ENCODE measurements at regions of chr1 and their contacts with region 1.

Region 1: DNA sequence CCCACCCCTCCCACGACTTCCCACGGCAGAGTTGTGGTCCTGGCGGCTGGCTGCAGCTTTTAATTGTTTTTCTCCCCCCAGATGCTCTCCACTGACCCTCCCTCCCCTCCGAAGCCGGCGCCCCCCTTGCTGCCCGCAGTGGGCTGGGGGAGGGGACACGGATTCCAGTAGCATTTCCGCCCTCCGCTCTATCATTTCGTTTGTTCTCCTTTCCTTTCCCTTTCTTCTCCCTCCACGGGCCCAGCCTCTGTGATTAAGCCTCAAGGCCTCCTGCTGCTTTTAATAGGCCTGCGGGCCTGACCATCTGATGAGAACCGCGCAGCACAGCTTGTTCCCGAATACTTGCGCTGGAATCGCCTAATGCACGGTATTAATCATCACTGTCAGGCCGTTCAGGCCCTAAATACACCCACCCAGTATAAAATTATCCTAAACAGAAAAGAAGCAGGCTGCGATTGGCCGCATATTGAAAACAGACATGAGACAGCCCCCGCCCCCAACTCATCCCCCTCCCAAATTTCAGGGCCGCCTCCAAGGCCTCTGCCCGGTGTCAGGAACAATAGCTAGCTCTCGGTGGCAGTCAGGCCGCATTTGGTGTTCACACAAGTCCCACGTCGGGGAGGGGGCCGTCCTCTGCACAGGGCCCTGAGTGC is 102.0 kb upstream of the ARHGEF16 start:
- DNase-seq: peak; percentile 66 to 84 (median 80)
- H3K4me3 ChIP-seq: peak overlapping the region; percentile 4
- H3K27ac ChIP-seq: peak overlapping the region; percentile 80 to 84
- H3K4me1 ChIP-seq: peaks cover 27% of the 10 kb centered on the region
- H3K27me3 ChIP-seq: no peaks in the 10 kb centered on the region
- CTCF ChIP-seq: no peak
- EP300 ChIP-seq: peak; percentile 68
- POLR2A ChIP-seq: peak; percentile 49

Region 2: GRCh38 chr1:3312898-3313575 is 39.4 kb before region 1 on chr1:
- intact Hi-C with region 1: loop called in 1 of 4 experiments (anchors 5 kb)
- DNase-seq: peak; percentile 93 to 97 (median 95)
- H3K4me3 ChIP-seq: no peak overlapping the region
- H3K27ac ChIP-seq: peak overlapping the region; percentile 80 to 97
- H3K4me1 ChIP-seq: peaks cover 12% of the 10 kb centered on the region
- H3K27me3 ChIP-seq: no peaks in the 10 kb centered on the region
- CTCF ChIP-seq: no peak
- EP300 ChIP-seq: peak; percentile 91
- POLR2A ChIP-seq: no peak

Region 3: DNA sequence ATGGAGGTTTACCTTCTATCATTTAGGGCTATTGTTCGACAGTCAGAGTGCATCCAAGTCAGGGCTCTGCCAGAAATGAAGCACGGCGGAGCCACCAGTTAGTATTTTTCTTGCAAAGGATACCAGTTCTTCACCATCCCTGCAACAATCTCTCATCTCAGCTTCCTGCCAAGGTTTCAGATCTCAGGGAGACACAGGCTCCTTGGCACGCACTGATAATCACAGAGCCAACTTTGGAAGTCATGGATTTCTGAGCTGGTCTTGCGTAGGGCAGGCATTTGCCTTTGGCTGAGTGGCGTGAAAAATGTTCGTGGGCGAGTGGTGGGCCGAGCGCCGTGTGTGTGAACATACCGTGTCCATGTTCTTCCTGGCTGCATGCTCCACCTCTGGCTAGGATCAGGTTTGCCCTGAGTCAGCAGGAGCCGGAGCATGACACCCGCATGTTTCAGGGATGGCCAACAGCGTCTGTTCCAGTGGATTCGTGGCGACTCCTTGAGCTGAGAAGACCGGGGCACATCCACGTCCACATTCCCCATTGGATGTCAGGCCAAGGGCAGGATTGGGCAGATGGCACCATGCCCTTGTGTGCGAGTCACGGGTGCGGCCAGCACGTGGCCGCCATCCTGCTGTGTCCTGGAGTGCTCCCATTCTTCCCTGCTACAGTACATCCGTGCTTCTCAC is 666.2 kb after region 1 on chr1:
- intact Hi-C with region 1: no loop called
- DNase-seq: no peak
- H3K4me3 ChIP-seq: no peak overlapping the region
- H3K27ac ChIP-seq: no peak overlapping the region
- H3K4me1 ChIP-seq: no peaks in the 10 kb centered on the region
- H3K27me3 ChIP-seq: no peaks in the 10 kb centered on the region
- CTCF ChIP-seq: no peak
- EP300 ChIP-seq: no peak
- POLR2A ChIP-seq: no peak

Measured in ovary (tissue), 10 donors.